ENCODE measurements at regions of chr5 and their contacts with region 1.

Region 1: GRCh38 chr5:135829681-135830383 is 4.6 kb upstream of the SLC25A48 start:
- DNase-seq: peak; percentile 36 to 66
- ATAC-seq: peak; percentile 22 to 66 (median 54)
- H3K4me3 ChIP-seq: no peak overlapping the region
- H3K27ac ChIP-seq: no peak overlapping the region
- H3K4me1 ChIP-seq: peaks cover 0 to 9% (median 7%) of the 10 kb centered on the region in 9 donors
- H3K27me3 ChIP-seq: peaks cover 5 to 49% (median 40%) of the 10 kb centered on the region in 7 donors
- CTCF ChIP-seq: peak; percentile 58 to 82 (median 77)

Region 2: DNA sequence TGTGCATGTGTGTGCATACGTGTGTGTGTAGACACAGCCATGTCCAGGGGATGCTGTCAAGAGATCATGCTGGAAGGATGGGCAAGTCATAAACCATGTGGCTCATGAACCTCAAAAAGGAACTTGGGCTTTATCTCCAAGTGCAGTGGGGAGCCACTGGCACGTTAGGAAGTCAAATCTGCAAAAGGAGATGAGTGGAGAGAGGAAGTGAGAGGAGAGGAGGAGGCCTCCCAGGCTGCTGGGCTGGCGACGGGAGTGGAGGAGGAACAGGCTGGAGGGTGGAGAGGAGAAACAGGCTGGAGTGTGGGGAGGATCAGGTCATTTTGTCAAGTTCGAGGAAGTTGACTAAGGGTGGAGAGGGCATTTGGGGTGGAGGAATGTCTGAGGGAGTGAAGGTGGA is 348.4 kb before region 1 on chr5:
- intact Hi-C with region 1: loop called in 1 of 10 experiments (anchors 10 kb)
- DNase-seq: no peak
- ATAC-seq: peak in 1 of 8 donors; percentile 19
- H3K4me3 ChIP-seq: no peak overlapping the region
- H3K27ac ChIP-seq: no peak overlapping the region
- H3K4me1 ChIP-seq: no peaks in the 10 kb centered on the region
- H3K27me3 ChIP-seq: peaks cover 0 to 79% (median 51%) of the 10 kb centered on the region in 7 donors
- CTCF ChIP-seq: no peak

Region 3: GRCh38 chr5:135753990-135754389 is 75.8 kb before region 1 on chr5:
- intact Hi-C with region 1: no loop called
- DNase-seq: no peak
- ATAC-seq: no peak
- H3K4me3 ChIP-seq: no peak overlapping the region
- H3K27ac ChIP-seq: no peak overlapping the region
- H3K4me1 ChIP-seq: no peaks in the 10 kb centered on the region
- H3K27me3 ChIP-seq: peaks cover 0 to 5% (median 0%) of the 10 kb centered on the region in 7 donors
- CTCF ChIP-seq: no peak

Region 4: DNA sequence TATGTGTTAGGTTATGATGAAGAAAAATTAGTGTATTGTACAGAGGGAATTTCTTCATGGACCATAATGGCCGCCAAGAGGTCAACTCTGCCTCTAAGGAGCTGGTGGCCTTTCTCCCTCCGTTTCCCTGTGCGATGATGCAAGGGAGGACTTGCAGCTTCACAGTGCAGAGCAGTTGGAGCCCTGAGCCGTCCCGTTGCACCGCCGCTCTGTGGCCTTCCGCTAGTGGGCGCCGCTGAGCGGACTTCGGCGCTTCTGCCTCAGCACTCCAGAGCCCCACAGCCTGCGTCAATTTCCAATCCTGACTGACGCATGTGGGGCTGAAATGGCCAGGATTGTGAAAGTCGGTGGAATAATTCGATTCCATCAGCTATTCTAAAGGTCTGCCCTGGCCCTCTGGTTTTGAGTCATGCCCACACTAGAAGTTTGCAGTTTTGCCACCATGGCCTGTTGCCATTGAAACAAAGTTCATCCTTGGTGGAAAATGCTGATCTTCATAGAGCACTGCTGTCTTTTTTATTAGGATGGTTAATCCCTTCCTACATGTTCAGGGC is 147.6 kb after region 1 on chr5:
- intact Hi-C with region 1: no loop called
- DNase-seq: peak; percentile 56 to 79
- ATAC-seq: peak; percentile 70 to 89 (median 79)
- H3K4me3 ChIP-seq: no peak overlapping the region
- H3K27ac ChIP-seq: peak overlapping the region in 4 of 10 donors; percentile 36 to 77 (median 56)
- H3K4me1 ChIP-seq: peaks cover 0 to 45% (median 30%) of the 10 kb centered on the region in 9 donors
- H3K27me3 ChIP-seq: peaks cover 0 to 18% (median 0%) of the 10 kb centered on the region in 7 donors
- CTCF ChIP-seq: peak; percentile 23 to 77 (median 60)

Measured in heart right ventricle (tissue), 16 donors.